AG04450 (cell line): ENCODE measurements at regions of chr17 and their contacts with region 1.

Region 1: DNA sequence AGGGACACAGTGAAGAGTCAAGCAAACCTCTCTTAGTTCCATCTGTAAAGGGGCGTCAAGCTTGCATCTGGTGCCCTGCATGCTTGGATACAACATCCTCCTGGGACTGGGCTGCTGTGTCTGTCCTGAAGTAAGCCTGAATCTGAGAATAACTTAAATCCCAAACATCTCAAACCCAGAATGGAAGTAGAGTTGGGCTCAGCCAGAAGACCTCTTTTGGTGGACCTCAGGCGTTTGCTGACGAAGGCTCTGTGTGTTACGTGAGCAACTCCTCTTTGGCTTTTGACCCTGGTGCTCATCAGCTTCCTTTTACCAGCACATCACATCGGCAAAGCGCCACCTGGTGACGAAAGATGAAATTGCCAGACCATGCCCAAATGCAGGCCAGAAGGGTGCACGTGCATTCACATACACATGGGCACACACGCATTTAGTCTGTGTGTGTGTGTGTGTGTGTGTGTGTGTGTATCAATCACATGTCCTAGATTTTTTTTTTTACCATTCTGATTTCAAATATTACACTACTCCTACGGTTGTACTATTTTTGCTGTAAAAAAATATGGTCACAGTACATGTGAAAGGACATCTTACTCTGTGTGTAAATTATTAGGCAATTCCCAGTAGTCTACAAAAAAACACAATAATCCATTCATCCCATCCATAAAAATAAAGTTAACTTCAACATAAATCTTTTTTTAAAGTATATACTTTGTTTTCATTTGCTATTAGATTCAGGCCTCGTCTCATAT is 41.1 kb upstream of the FOXJ1 start:
- DNase-seq: peak; percentile 62
- H3K4me3 ChIP-seq: no peak overlapping the region
- H3K27ac ChIP-seq: no peak overlapping the region
- H3K27me3 ChIP-seq: no peaks in the 10 kb centered on the region
- CTCF ChIP-seq: peak; percentile 91

Region 2: DNA sequence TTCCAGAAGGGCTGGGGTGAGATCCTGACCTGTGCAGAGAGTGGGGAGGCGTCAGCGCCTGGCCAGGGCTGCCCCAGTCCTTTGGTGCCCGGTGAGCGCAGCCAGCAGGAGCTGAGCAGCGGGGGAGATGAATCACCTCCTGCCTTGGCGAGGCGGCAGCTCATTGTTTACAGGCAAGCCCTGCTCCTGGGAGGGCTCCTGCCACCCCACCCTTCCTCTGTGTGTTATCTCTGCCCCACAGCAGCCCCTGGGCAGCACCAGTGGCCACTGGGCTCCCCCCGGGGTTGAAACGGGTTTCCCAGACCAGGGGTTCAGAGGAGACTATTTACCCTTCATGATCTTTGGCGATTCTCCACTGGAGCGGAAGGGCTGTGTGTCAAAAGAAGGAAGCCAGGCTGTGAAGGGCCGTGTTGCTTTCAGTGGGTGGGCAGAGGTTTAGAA is 475.0 kb before region 1 on chr17:
- CTCF ChIA-PET with region 1: no interaction called
- POLR2A ChIA-PET with region 1: no interaction called
- DNase-seq: no peak
- H3K4me3 ChIP-seq: no peak overlapping the region
- H3K27ac ChIP-seq: no peak overlapping the region
- H3K27me3 ChIP-seq: no peaks in the 10 kb centered on the region
- CTCF ChIP-seq: no peak

Region 3: DNA sequence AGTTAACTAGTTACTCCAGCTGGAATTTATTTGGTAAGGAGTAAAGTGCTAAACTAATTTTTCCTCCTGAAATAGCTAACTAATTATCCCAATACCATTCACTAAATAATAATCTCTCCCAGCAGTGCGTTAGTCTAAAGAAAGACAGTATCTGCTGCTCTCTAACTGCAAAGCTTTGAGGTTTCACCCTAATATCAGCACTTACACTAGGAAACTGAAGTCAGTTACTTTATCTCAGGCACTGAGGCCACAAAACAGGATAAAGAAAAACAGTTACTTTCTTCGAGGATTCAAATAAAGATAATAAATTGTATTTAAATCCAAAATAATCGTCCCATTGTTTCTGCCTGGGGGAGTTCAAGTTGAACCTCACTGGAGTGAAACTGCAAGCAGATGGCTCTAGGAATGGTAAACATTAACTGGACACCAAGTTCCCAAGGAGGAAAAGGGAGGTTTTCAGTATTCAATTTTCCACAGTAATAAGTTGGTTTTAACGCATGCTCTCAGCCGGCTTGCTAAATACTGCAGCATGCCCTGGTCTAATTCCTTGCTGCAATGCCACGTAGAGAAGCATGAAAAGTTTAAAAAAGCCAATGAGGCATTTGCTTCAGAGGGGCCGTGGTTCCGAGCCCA is 21.2 kb before region 1 on chr17:
- CTCF ChIA-PET with region 1: interaction called, 11 read pairs
- POLR2A ChIA-PET with region 1: no interaction called
- DNase-seq: no peak
- H3K4me3 ChIP-seq: no peak overlapping the region
- H3K27ac ChIP-seq: no peak overlapping the region
- H3K27me3 ChIP-seq: peaks cover 32% of the 10 kb centered on the region
- CTCF ChIP-seq: no peak

Region 4: DNA sequence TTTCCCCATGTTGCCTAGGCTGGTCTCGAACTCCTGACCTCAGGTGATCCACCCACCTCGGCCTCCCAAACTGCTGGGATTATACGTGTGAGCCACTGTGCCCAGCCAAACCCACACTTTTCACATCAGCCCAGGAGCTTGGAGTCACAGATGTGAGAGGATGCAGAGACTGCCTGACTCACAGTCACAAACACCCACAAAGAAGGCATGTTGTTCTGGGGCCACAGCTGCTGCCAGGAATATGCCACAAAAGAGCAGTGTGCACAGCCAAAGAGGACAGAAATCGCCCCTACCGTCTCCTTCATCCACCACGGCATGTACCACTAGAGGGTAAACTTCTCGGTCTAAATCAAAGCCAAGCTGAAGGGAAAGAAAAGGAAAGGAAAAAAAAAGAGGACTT is 16.0 kb before region 1 on chr17:
- CTCF ChIA-PET with region 1: interaction called, 23 read pairs
- POLR2A ChIA-PET with region 1: no interaction called
- DNase-seq: no peak
- H3K4me3 ChIP-seq: no peak overlapping the region
- H3K27ac ChIP-seq: no peak overlapping the region
- H3K27me3 ChIP-seq: peaks cover 12% of the 10 kb centered on the region
- CTCF ChIP-seq: no peak

Region 5: GRCh38 chr17:76199469-76199868 is 17.3 kb after region 1 on chr17:
- CTCF ChIA-PET with region 1: interaction called, 11 read pairs
- POLR2A ChIA-PET with region 1: no interaction called
- DNase-seq: no peak
- H3K4me3 ChIP-seq: no peak overlapping the region
- H3K27ac ChIP-seq: no peak overlapping the region
- H3K27me3 ChIP-seq: peaks cover 4% of the 10 kb centered on the region
- CTCF ChIP-seq: no peak

Region 6: DNA sequence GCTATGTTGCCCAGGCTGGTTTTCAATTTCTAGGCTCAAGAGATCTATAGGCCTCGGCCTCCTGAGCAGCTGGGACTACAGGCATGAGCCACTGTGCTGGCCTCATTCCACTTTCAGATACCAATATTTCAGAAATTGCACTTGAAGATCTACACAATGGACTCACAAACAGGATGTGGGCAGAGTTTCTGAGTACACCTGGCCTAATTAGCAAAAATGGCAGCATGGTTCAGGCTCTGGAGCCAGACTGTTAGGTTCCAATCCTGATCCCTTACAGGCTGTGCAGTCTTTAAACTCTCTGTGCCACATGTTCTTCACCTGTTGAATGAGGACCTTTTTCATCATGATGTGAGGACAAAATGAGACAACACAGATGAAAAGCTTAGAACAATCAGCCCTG is 25.9 kb after region 1 on chr17:
- CTCF ChIA-PET with region 1: interaction called, 20 read pairs
- POLR2A ChIA-PET with region 1: no interaction called
- DNase-seq: no peak
- H3K4me3 ChIP-seq: no peak overlapping the region
- H3K27ac ChIP-seq: no peak overlapping the region
- H3K27me3 ChIP-seq: no peaks in the 10 kb centered on the region
- CTCF ChIP-seq: no peak